CD8-positive, alpha-beta T cell (primary cell): ENCODE measurements at regions of chr1 and their contacts with region 1.

Region 1: GRCh38 chr1:23098463-23099170 is 70.0 kb downstream of the LUZP1 start:
- DNase-seq: peak; percentile 37 to 83 (median 63)
- ATAC-seq: peak; percentile 51
- H3K4me3 ChIP-seq: no peak overlapping the region
- H3K4me3 Mint-ChIP-seq: peak overlapping the region; percentile 44
- H3K27ac ChIP-seq: no peak overlapping the region
- H3K27ac Mint-ChIP-seq: peak overlapping the region; percentile 58
- H3K4me1 ChIP-seq: peaks cover 18% of the 10 kb centered on the region
- H3K4me1 Mint-ChIP-seq: peaks cover 46% of the 10 kb centered on the region
- H3K27me3 ChIP-seq: no peaks in the 10 kb centered on the region
- H3K27me3 Mint-ChIP-seq: no peaks in the 10 kb centered on the region
- CTCF ChIP-seq: peak; percentile 81

Region 2: GRCh38 chr1:23108918-23109533 is 10.4 kb after region 1 on chr1:
- CTCF ChIA-PET with region 1: interaction called, 29 read pairs
- POLR2A ChIA-PET with region 1: interaction called, 4 read pairs
- intact Hi-C with region 1: no loop called
- DNase-seq: no peak
- ATAC-seq: no peak
- H3K4me3 ChIP-seq: no peak overlapping the region
- H3K4me3 Mint-ChIP-seq: no peak overlapping the region
- H3K27ac ChIP-seq: no peak overlapping the region
- H3K27ac Mint-ChIP-seq: no peak overlapping the region
- H3K4me1 ChIP-seq: peaks cover 14% of the 10 kb centered on the region
- H3K4me1 Mint-ChIP-seq: peaks cover 31% of the 10 kb centered on the region
- H3K27me3 ChIP-seq: no peaks in the 10 kb centered on the region
- H3K27me3 Mint-ChIP-seq: no peaks in the 10 kb centered on the region
- CTCF ChIP-seq: no peak

Region 3: GRCh38 chr1:23122023-23122748 is 23.6 kb after region 1 on chr1:
- CTCF ChIA-PET with region 1: interaction called, 12 read pairs
- POLR2A ChIA-PET with region 1: interaction called, 4 read pairs
- intact Hi-C with region 1: no loop called
- DNase-seq: no peak
- ATAC-seq: no peak
- H3K4me3 ChIP-seq: no peak overlapping the region
- H3K4me3 Mint-ChIP-seq: no peak overlapping the region
- H3K27ac ChIP-seq: no peak overlapping the region
- H3K27ac Mint-ChIP-seq: no peak overlapping the region
- H3K4me1 ChIP-seq: peaks cover 19% of the 10 kb centered on the region
- H3K4me1 Mint-ChIP-seq: peaks cover 54% of the 10 kb centered on the region
- H3K27me3 ChIP-seq: no peaks in the 10 kb centered on the region
- H3K27me3 Mint-ChIP-seq: no peaks in the 10 kb centered on the region
- CTCF ChIP-seq: no peak

Region 4: GRCh38 chr1:23168457-23169194 is 70.0 kb after region 1 on chr1 and contains the start of gene LUZP1:
- CTCF ChIA-PET with region 1: interaction called, 17 read pairs
- POLR2A ChIA-PET with region 1: interaction called, 15 read pairs
- intact Hi-C with region 1: loop called (anchors 1 kb)
- DNase-seq: peak; percentile 67 to 94 (median 87)
- ATAC-seq: peak; percentile 90
- H3K4me3 ChIP-seq: peak within 1 kb of the TSS; percentile 85 to 93
- H3K4me3 Mint-ChIP-seq: peak within 1 kb of the TSS; percentile 94
- H3K27ac ChIP-seq: peak within 1 kb of the TSS; percentile 75
- H3K27ac Mint-ChIP-seq: peak within 1 kb of the TSS; percentile 86
- H3K4me1 ChIP-seq: peaks cover 20% of the 10 kb centered on the region
- H3K4me1 Mint-ChIP-seq: peaks cover 42% of the 10 kb centered on the region
- H3K27me3 ChIP-seq: no peaks in the 10 kb centered on the region
- H3K27me3 Mint-ChIP-seq: no peaks in the 10 kb centered on the region
- CTCF ChIP-seq: no peak
- total RNA-seq, gene LUZP1: 51.0 to 52.5 TPM

Region 5: DNA sequence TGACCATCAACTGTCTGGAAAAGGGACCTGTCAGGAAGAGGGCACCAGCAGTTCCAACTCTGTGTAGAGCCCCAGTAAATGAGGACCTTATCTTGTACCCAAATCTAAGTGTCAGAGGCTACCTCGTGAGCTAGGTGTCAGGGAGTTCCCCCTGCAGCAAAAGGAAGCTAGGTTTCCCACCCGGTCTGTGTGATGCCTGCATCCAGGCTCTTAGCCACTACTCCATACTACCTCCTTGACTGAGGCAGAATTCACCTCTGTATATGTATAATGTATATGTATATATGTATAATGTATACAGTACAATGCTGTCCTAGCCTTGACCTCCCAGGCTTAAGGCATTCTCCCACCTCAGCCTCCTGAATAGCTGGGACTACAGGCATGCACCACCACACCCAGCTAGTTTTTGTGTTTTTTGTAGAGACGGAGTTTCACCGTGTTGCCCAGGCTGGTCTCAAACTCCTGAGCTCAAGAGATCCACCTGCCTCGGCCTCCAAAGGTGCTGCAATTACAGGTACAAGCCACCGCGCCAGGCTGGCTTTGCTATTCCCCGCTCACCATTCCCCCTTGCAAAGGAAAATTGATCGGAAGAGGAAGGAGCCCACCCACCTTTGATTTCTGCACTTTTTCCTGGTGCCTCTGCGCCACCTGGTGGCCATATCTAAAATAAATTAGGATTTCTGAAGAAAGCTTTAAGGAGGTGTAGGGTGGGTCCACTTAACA is 85.8 kb after region 1 on chr1:
- CTCF ChIA-PET with region 1: interaction called, 662 read pairs
- POLR2A ChIA-PET with region 1: interaction called, 23 read pairs
- intact Hi-C with region 1: loop called (anchors 1 kb)
- DNase-seq: peak in 8 of 9 experiments; percentile 17 to 75 (median 43)
- ATAC-seq: peak; percentile 48
- H3K4me3 ChIP-seq: peak overlapping the region in 1 of 2 experiments; percentile 3
- H3K4me3 Mint-ChIP-seq: peak overlapping the region; percentile 74
- H3K27ac ChIP-seq: no peak overlapping the region
- H3K27ac Mint-ChIP-seq: no peak overlapping the region
- H3K4me1 ChIP-seq: no peaks in the 10 kb centered on the region
- H3K4me1 Mint-ChIP-seq: peaks cover 8% of the 10 kb centered on the region
- H3K27me3 ChIP-seq: no peaks in the 10 kb centered on the region
- H3K27me3 Mint-ChIP-seq: peaks cover 4% of the 10 kb centered on the region
- CTCF ChIP-seq: peak; percentile 94

Region 6: GRCh38 chr1:23403735-23404486 is 305.3 kb after region 1 on chr1:
- CTCF ChIA-PET with region 1: interaction called, 3 read pairs
- POLR2A ChIA-PET with region 1: no interaction called
- intact Hi-C with region 1: loop called in 1 of 2 experiments (anchors 2 kb)
- DNase-seq: peak; percentile 69 to 88 (median 78)
- ATAC-seq: peak; percentile 100
- H3K4me3 ChIP-seq: no peak overlapping the region
- H3K4me3 Mint-ChIP-seq: no peak overlapping the region
- H3K27ac ChIP-seq: no peak overlapping the region
- H3K27ac Mint-ChIP-seq: no peak overlapping the region
- H3K4me1 ChIP-seq: peaks cover 4% of the 10 kb centered on the region
- H3K4me1 Mint-ChIP-seq: peaks cover 9% of the 10 kb centered on the region
- H3K27me3 ChIP-seq: no peaks in the 10 kb centered on the region
- H3K27me3 Mint-ChIP-seq: no peaks in the 10 kb centered on the region
- CTCF ChIP-seq: peak; percentile 87